ENCODE measurements at regions of chr12 and their contacts with region 1.

Region 1: DNA sequence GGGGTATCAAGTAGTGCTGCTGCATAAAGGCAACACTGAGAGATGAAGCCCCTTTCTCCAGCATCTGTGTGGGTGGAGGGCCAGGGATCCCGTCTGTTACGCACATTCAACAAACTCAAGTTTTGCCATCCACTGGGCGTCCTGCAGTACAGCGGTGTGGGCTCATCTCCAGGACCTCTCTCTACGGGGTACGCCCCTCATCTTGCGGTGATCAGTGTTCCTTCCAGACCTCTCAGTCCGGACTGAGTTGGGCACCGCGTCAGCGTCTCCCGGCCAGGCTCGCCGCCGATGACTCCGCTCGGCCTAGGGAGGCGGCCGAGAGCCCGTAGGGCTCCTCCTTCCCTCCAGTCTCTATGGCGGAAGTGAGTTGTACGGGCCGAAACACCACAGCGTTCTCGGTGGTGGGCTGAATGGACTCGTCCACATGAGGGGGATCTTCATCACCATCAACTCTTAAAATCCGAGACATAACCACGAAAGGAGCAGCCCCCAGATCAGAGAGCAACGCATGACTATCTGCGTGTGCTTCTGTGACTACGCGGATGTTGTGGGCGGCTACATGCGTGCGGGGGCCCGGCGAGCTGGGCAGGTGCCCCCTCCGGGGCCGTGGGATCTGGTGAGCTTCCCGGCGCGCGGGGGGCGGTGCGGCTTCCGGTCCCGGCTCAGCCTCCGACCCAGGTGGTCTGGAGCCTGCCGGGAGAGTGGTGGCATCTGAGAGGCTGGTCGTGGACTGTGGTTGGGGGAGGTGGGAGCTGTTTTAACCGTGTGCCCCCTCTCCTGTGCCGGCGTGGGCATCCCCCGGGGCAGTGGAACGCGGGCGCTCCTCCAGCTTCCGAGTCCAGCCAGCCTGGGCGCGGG is at the start of gene ATG101:
- DNase-seq: peak; percentile 82 to 90
- H3K4me3 ChIP-seq: peak within 1 kb of the TSS; percentile 89 to 97 (median 95)
- H3K27ac ChIP-seq: peak within 1 kb of the TSS; percentile 99
- H3K4me1 ChIP-seq: peaks cover 0 to 12% (median 3%) of the 10 kb centered on the region in 4 experiments; a peak in 4 of 7 replicates
- H3K27me3 ChIP-seq: no peaks in the 10 kb centered on the region; a peak in 2 of 7 replicates
- CTCF ChIP-seq: peak; percentile 88 to 96 (median 96)
- EP300 ChIP-seq: peak in 1 of 2 experiments; percentile 100; a peak in 2 of 3 replicates
- POLR2A ChIP-seq: peak in 1 of 2 experiments; percentile 69; a peak in 1 of 3 replicates
- RAD21 ChIP-seq: peak; percentile 19 to 29; a peak in 3 of 4 replicates
- total RNA-seq, gene ATG101: 48.9 and 49.8 TPM in 2 replicates

Region 2: DNA sequence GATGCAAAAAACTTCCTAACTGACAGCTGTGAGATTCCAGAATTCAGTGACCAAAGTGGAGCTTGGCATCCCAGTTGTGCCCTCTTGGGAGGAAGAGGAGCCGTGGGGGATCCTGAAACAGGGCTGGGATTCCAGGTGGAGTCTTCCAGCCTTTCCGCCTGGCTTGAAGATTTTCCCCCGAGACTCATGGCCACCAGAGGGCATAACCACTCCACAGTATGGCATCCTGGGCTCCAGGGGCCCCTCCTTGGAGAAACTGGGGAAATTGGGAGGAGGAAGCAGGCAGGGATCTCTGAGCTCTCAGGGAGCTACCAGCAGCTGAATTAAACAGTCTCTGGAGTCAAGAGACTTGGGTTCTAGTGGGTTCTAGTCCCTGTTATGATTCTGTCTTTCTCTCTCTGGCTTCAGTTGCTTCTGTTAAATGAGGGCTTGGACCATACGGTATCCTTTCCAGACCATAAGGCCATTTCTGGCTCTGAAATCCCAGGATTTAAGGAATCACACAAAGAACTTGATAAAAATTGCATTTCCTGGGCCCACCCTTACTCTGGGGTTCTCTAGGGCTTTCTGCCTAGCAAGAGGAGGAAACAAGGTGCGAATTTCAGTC is 65.4 kb before region 1 on chr12:
- CTCF ChIA-PET with region 1: interaction called, 16 read pairs
- POLR2A ChIA-PET with region 1: no interaction called
- DNase-seq: peak in 1 of 2 experiments; percentile 81
- H3K4me3 ChIP-seq: no peak overlapping the region
- H3K27ac ChIP-seq: no peak overlapping the region
- H3K4me1 ChIP-seq: peaks cover 0 to 16% (median 8%) of the 10 kb centered on the region in 4 experiments; a peak in 6 of 7 replicates
- H3K27me3 ChIP-seq: peaks cover 19 to 47% (median 44%) of the 10 kb centered on the region in 4 experiments
- CTCF ChIP-seq: peak in 2 of 3 experiments; percentile 83 to 93; a peak in 3 of 4 replicates
- EP300 ChIP-seq: no peak
- POLR2A ChIP-seq: no peak
- RAD21 ChIP-seq: peak; percentile 91 to 95

Region 3: DNA sequence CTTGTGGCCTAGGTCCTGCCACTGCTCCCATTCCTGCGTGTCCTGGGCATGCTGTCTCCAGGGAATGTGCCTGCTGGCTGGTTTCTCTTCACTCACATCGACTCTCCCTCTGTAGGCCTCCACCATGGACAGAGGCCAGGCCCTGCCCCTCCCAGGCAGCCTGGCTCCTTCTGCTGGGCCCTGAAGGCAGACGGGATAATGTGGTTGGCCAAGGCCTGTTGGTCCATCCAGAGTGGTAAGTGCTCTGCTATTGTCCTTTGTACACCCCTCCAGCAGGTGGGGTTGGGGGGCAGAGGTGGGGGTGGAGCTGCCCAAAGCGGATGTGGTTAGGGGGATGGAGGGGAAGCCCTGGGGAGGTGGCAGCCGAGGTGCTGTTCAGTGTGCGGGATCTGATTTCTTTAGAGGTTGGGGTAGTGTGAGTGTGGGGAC is 27.8 kb before region 1 on chr12:
- CTCF ChIA-PET with region 1: interaction called, 56 read pairs
- POLR2A ChIA-PET with region 1: interaction called, 9 read pairs
- DNase-seq: no peak
- H3K4me3 ChIP-seq: no peak overlapping the region
- H3K27ac ChIP-seq: no peak overlapping the region
- H3K4me1 ChIP-seq: peaks cover 0 to 3% (median 0%) of the 10 kb centered on the region in 4 experiments; a peak in 2 of 7 replicates
- H3K27me3 ChIP-seq: no peaks in the 10 kb centered on the region; a peak in 3 of 7 replicates
- CTCF ChIP-seq: peak in 1 of 3 experiments; percentile 2; a peak in 1 of 4 replicates
- EP300 ChIP-seq: no peak
- POLR2A ChIP-seq: no peak
- RAD21 ChIP-seq: no peak

Region 4: GRCh38 chr12:52050761-52051541 is 18.6 kb before region 1 on chr12 and contains the start of gene NR4A1:
- CTCF ChIA-PET with region 1: interaction called, 56 read pairs
- POLR2A ChIA-PET with region 1: interaction called, 14 read pairs
- DNase-seq: peak in 1 of 2 experiments; percentile 87
- H3K4me3 ChIP-seq: peak within 1 kb of the TSS; percentile 44 to 72 (median 64)
- H3K27ac ChIP-seq: no peak within 1 kb of the TSS
- H3K4me1 ChIP-seq: peaks cover 0 to 19% (median 9%) of the 10 kb centered on the region in 4 experiments; a peak in 6 of 7 replicates
- H3K27me3 ChIP-seq: peaks cover 4 to 44% (median 36%) of the 10 kb centered on the region in 4 experiments
- CTCF ChIP-seq: no peak
- EP300 ChIP-seq: 0 out of 3 replicates have a peak, but pooled peaks of 1 of the 2 experiments have one; percentile 7
- POLR2A ChIP-seq: no peak; a peak in 1 of 3 replicates
- RAD21 ChIP-seq: no peak
- total RNA-seq, gene NR4A1: 18.7 and 19.3 TPM in 2 replicates

Region 5: DNA sequence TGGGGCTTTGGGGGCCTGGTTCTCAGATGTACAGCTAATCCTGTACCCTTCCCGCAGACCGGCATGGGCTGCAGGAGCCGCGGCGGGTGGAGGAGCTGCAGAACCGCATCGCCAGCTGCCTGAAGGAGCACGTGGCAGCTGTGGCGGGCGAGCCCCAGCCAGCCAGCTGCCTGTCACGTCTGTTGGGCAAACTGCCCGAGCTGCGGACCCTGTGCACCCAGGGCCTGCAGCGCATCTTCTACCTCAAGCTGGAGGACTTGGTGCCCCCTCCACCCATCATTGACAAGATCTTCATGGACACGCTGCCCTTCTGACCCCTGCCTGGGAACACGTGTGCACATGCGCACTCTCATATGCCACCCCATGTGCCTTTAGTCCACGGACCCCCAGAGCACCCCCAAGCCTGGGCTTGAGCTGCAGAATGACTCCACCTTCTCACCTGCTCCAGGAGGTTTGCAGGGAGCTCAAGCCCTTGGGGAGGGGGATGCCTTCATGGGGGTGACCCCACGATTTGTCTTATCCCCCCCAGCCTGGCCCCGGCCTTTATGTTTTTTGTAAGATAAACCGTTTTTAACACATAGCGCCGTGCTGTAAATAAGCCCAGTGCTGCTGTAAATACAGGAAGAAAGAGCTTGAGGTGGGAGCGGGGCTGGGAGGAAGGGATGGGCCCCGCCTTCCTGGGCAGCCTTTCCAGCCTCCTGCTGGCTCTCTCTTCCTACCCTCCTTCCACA is 10.8 kb before region 1 on chr12:
- CTCF ChIA-PET with region 1: interaction called, 33 read pairs
- POLR2A ChIA-PET with region 1: interaction called, 7 read pairs
- DNase-seq: no peak
- H3K4me3 ChIP-seq: no peak overlapping the region
- H3K27ac ChIP-seq: no peak overlapping the region
- H3K4me1 ChIP-seq: no peaks in the 10 kb centered on the region; a peak in 1 of 7 replicates
- H3K27me3 ChIP-seq: no peaks in the 10 kb centered on the region; a peak in 1 of 7 replicates
- CTCF ChIP-seq: no peak
- EP300 ChIP-seq: no peak
- POLR2A ChIP-seq: no peak
- RAD21 ChIP-seq: no peak